Activated CD4-positive, alpha-beta T cell treated with anti-CD3 and anti-CD28 coated beads for 36 hours (primary cell): ENCODE measurements at regions of chr1 and their contacts with region 1.

Region 1: DNA sequence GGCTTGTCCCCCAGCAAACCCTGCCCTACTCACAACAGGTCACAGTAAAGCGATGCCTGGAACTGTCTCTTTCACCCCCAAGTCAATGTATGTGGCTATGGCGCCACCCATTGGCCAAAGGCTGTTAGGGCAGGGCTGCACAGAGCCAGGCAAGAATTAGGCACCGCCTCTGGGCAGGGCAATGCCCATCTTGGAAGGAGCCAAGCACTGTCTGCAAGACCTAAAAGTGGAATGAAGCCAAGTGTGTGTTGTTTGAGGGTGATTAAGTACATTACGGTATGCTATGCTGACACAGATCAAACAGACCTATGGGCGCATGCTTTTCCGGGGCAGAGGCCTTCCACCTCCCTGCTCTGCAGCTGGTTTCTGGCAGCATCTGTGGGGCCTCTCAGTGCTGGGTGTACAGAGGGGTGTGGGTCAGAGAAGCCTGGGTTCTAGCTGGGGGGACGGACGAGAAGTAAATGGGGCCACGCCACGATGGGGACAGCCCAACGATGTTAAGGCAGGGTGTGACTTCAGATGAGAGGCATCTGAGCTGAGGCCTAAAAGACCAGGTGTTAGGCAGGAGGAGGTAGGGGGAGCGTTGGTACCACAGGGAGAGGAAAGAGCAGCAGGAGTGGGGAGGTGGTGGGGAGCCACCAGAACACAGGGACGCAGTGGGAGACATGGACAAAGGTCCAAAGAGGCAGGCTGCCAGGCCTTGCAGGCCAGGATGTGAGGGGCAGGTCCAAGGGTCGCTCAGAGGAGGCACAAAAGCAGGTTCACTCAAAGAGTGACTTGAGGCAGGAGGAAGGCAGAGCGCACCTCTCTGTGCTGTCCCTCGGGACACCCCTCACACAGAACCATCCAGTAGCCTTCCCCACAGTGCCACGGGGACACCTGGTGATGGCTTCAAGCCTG is 49.8 kb downstream of the ACOT7 start:
- DNase-seq: peak; percentile 83
- ATAC-seq: peak; percentile 83
- H3K4me3 Mint-ChIP-seq: no peak overlapping the region
- H3K27ac Mint-ChIP-seq: no peak overlapping the region
- H3K4me1 Mint-ChIP-seq: peaks cover 10% of the 10 kb centered on the region
- H3K27me3 Mint-ChIP-seq: no peaks in the 10 kb centered on the region

Region 2: GRCh38 chr1:6401673-6402072 is 57.9 kb after region 1 on chr1:
- CTCF ChIA-PET with region 1: interaction called, 40 read pairs
- POLR2A ChIA-PET with region 1: no interaction called
- intact Hi-C with region 1: loop called (anchors 1 kb)
- DNase-seq: no peak
- ATAC-seq: no peak
- H3K4me3 Mint-ChIP-seq: no peak overlapping the region
- H3K27ac Mint-ChIP-seq: no peak overlapping the region
- H3K4me1 Mint-ChIP-seq: no peaks in the 10 kb centered on the region
- H3K27me3 Mint-ChIP-seq: peaks cover 2% of the 10 kb centered on the region

Region 3: DNA sequence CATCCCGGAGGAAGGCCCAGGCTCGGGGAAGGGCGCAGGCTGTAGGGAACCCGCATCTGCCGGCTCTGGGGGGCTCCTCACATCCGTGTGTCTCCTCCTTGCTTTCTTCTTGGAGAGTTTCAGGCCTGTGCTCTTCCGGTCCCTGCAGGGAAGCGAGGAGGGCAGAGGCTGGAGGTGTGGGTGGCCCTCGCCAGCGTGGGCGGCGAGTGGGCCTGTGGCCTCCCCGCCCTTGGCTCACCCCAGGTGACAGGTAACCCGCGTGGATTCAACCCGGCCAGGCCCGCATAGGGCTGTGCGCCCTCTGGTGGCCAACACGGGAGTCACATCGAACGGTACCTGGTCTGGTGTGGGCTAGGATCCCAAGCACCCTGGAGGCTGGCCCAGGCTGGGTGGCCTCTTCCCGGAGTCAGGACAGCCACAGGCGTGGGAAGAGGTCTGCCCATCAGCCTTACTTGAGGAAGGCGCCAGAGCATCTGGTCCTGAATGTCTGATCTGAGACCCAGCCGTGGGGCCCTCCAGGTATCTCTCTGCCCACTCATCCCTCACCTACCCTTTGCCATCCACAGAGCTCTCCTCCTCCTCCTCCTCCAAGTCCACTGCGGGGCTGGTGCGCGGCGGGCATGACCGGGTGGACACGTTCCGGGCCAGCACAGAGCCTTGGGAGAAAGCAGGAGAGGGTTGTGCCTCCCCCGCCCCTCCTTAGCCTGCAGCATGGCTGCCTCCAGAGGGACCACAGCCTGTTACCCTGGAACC is 131.8 kb after region 1 on chr1:
- CTCF ChIA-PET with region 1: no interaction called
- POLR2A ChIA-PET with region 1: no interaction called
- intact Hi-C with region 1: loop called in 1 of 2 experiments (anchors 5 kb)
- DNase-seq: peak; percentile 84
- ATAC-seq: peak; percentile 94
- H3K4me3 Mint-ChIP-seq: no peak overlapping the region
- H3K27ac Mint-ChIP-seq: no peak overlapping the region
- H3K4me1 Mint-ChIP-seq: peaks cover 2% of the 10 kb centered on the region
- H3K27me3 Mint-ChIP-seq: no peaks in the 10 kb centered on the region